ENCODE measurements at regions of chr13 and their contacts with region 1.

Region 1: GRCh38 chr13:37074703-37075102 is 15.2 kb upstream of the SUPT20H start:
- DNase-seq: no peak
- H3K4me3 Mint-ChIP-seq: no peak overlapping the region
- H3K27ac Mint-ChIP-seq: no peak overlapping the region
- H3K4me1 Mint-ChIP-seq: no peaks in the 10 kb centered on the region
- H3K27me3 Mint-ChIP-seq: no peaks in the 10 kb centered on the region

Region 2: DNA sequence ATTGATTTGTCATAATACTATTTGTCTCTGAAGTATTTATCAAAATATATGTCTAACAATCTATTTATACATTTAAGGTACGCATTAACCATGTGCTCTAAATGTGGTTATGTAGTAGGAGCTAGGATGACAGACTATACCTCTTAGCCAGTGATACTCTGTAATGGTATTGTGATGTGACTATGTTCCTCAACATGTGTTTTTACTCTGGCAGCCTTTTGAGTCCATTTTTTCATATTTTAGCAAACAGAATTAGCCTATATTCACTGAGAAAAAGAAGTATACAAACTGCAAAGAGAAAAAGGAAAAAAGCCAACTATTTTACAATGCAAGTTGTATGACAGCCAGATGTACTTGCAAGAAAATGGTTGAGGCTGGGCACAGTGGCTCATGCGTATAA is 1624.9 kb before region 1 on chr13:
- CTCF ChIA-PET with region 1: no interaction called
- intact Hi-C with region 1: no loop called
- DNase-seq: no peak
- H3K4me3 Mint-ChIP-seq: no peak overlapping the region
- H3K27ac Mint-ChIP-seq: no peak overlapping the region
- H3K4me1 Mint-ChIP-seq: no peaks in the 10 kb centered on the region
- H3K27me3 Mint-ChIP-seq: no peaks in the 10 kb centered on the region

Region 3: DNA sequence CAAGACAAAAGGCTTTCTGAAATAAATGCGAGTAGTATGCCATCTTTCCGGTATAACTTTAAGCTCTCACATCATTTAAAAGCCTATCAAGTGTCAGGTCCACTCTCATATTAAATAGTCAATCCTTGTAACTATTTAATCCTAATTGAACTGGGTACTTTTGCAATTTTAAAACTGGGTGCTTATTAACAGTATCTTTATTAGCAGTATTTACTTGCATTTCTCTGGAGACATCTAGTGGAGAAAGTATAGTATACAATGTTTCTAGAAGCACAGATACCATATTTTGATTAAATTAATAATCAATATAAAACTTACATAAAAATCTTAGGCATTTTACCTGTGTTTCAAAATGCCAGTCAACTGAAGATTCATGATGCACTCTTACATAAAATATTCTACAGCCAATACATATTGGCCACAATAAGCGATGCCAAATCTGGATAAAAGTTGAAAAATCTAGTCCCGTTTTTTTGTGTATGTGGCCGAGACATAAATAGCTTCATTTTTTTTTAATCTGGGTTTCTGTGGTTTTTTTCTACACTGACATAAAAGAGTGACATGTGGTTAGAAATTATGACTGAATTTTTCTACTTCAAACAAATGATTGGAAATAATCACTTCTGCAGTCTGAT is 528.2 kb after region 1 on chr13:
- CTCF ChIA-PET with region 1: no interaction called
- intact Hi-C with region 1: loop called (anchors 10 kb)
- DNase-seq: no peak
- H3K4me3 Mint-ChIP-seq: no peak overlapping the region
- H3K27ac Mint-ChIP-seq: no peak overlapping the region
- H3K4me1 Mint-ChIP-seq: no peaks in the 10 kb centered on the region
- H3K27me3 Mint-ChIP-seq: no peaks in the 10 kb centered on the region

Region 4: DNA sequence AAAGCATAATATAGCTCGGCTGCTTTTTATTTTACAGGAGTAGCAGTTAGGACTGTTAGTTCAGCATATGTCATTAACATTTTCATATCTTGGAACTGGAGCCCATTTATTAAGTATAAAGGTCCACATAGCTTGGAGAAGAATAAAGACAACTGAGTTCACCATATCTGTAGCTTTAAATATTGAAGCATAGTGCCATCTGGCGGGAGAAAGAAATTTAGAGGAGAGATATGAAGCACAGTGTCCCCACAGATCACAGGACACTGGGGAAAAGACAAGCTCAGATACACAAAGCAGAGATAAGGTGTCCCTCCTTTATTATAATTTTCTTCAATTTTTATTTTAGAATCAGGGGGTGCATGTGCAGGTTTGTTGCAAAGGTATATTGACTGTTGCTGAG is 1507.4 kb after region 1 on chr13:
- CTCF ChIA-PET with region 1: interaction called, 3 read pairs
- intact Hi-C with region 1: loop called (anchors 1 kb)
- DNase-seq: peak; percentile 4
- H3K4me3 Mint-ChIP-seq: no peak overlapping the region
- H3K27ac Mint-ChIP-seq: no peak overlapping the region
- H3K4me1 Mint-ChIP-seq: no peaks in the 10 kb centered on the region
- H3K27me3 Mint-ChIP-seq: no peaks in the 10 kb centered on the region

Region 5: DNA sequence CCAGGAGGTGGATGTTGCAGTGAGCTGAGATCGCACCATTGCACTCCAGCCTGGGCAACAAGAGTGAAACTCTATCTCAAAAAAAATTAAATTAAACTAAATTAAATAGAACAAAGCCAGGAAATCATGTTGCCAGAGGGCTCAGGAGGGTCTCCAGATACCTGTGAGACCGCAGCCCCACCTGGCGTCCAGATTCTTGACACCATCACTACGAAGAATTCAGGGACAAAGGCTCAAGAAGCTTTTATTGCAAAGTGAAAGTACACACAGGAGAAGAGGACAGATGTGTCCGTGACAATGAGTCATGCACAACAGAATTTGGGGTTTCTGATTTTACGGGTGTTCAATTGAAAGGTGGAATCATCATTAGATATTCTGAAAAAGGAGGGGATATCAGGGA is 1839.4 kb after region 1 on chr13:
- CTCF ChIA-PET with region 1: no interaction called
- intact Hi-C with region 1: loop called (anchors 10 kb)
- DNase-seq: no peak
- H3K4me3 Mint-ChIP-seq: no peak overlapping the region
- H3K27ac Mint-ChIP-seq: no peak overlapping the region
- H3K4me1 Mint-ChIP-seq: no peaks in the 10 kb centered on the region
- H3K27me3 Mint-ChIP-seq: peaks cover 11% of the 10 kb centered on the region

Measured in activated naive CD4-positive, alpha-beta T cell treated with anti-CD3 and anti-CD28 coated beads for 36 hours (primary cell).